GM13976 (cell line): ENCODE measurements at regions of chr10 and their contacts with region 1.

Region 1: DNA sequence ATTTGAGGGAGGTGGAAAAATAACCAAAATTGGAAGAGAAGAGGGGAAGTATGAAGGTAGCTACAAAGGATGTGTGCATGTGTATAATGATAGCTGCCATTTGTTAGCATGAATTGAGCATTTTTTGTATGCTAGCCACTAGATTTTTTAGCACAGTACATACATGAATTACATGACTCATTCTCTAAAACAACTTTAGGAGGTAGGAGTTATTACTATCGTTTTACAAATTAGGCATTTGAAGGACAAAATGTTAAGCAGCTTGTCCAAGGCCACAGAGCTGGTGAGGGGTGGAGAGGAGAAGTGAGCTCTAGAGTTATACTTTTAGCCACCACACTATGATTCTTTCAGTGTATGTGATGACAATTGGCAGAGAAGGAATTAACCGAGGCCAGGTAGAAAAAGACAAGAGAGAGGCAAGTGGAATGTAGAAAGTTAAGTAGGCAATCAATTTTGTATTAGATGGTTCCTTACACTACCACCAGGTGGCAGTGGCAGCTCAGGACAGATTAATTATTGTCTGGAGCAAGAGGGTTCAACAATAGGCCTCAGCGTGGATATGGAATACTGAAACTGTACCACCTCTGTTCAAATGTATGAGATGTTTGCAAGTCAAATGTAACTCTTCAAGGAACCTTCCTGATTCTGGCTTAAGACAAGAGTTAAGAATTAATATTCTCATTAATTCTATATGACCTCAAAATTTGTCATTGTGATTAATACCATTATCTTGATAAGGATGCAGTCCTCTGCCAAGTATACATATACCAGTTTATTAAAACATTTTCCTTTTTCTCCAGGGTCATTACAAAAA is 128.0 kb downstream of the MBL2 start:
- DNase-seq: peak; percentile 27
- CTCF ChIP-seq: peak; percentile 37

Region 2: GRCh38 chr10:52779541-52780390 is 135.2 kb after region 1 on chr10:
- in situ Hi-C with region 1: loop called (anchors 10 kb)
- DNase-seq: peak; percentile 71
- CTCF ChIP-seq: peak; percentile 87

Region 3: DNA sequence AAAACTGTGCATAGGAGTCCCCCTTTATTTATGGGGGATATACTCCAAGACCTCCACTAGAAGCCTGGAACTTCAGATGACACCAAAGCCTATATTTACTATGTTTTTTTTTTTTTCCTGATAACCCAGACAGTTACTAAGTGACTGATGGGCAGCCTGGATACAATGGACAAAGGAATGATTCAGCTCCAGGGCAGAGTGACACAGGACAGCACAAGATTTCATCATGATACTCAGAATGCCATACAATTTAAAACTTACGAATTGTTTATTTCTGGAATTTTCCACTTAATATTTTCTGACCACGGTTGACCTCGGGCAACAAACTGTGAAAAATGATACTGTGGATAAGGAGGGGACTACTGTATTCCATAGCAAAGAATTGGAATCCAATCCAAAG is 1312.8 kb after region 1 on chr10:
- in situ Hi-C with region 1: no loop called
- DNase-seq: no peak
- CTCF ChIP-seq: no peak